Aorta (tissue), 5 donors: ENCODE measurements at regions of chr7 and their contacts with region 1.

Region 1: DNA sequence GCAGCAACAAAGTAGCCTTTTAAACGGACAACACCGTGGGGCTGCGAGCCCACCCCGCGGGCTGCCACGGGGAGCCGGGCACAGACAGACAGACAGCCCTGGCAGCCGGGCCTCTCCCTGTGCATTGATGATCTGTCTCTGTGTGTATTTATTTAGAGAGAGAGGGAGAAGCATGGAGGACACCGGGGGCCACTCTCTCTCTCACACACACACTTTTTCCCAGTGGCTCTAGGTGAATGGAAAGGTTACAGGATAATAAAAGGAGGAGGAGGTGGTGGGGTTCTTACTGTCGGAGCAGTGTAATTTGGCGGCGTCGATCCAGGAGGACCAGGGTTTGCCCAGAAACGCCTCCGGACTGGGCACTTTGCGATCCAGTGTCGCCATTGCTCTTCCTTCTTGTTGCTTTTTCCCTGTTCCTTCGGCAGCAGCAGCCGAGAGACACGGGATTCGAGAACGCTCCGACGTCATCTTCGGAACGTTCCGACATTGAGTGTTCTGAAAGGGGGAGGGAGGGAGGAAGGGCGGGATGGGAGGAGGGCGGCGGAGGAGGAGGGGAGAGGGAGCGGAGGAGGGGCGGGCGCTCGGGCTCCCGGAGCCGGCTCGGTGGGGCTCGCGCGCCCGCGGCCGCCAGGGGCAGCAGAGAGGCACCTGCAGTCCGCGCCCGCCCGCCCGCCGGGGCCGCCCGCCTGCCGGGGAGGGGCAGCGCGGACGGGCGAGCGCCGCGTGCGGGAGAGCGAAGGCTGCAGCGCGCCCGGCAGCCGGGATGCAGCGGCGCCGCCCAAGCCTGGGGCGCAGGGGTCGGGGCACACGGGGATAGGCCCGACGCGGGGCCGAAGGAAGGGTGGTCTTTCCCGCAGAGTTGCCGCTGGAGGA is at the start of gene ATXN7L1:
- DNase-seq: peak; percentile 97 to 98
- ATAC-seq: peak; percentile 98
- H3K4me3 ChIP-seq: peak within 1 kb of the TSS; percentile 59 to 71
- H3K27ac ChIP-seq: peak within 1 kb of the TSS in 1 of 2 donors; percentile 20
- H3K4me1 ChIP-seq: peaks cover 0 to 4% of the 10 kb centered on the region in 2 donors
- H3K27me3 ChIP-seq: no peaks in the 10 kb centered on the region
- total RNA-seq, gene ATXN7L1: 12.8 to 20.1 TPM

Region 2: DNA sequence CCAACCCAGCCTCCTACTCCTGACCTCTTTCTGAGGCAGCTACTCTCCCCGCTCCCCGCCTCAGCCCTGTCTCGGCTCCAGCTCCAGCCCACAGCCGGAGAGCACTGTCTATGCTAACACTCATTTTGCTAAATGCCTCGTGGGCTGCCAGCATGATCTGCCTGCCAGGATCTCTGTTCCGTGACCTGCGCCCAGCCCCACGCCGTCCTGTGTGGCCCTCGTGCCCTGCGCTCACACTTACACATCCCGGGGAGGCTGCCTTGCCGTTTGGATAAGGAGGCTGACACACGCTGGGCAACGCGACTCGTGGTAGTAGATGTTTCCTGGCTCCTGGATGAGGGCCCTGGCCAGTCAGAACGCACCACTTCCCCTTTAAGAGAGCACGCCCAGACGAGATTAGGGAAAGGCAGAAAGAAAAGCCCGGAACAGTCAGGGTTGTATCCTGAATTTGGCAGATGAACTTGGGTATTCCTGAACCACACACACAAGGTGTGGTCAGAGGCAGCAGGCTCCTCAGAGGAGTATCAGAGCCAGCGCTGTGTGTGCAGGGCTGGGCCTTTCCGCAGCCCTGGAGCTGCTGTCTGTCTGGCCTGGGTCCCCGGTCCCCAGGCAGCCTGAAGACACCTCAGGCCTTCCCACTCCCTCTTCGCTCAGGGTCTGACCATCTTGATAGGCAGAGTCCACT is 197.4 kb before region 1 on chr7:
- intact Hi-C with region 1: loop called in 1 of 2 experiments (anchors 10 kb)
- DNase-seq: peak; percentile 89 to 92
- ATAC-seq: peak; percentile 85
- H3K4me3 ChIP-seq: no peak overlapping the region
- H3K27ac ChIP-seq: no peak overlapping the region
- H3K4me1 ChIP-seq: no peaks in the 10 kb centered on the region
- H3K27me3 ChIP-seq: no peaks in the 10 kb centered on the region

Region 3: DNA sequence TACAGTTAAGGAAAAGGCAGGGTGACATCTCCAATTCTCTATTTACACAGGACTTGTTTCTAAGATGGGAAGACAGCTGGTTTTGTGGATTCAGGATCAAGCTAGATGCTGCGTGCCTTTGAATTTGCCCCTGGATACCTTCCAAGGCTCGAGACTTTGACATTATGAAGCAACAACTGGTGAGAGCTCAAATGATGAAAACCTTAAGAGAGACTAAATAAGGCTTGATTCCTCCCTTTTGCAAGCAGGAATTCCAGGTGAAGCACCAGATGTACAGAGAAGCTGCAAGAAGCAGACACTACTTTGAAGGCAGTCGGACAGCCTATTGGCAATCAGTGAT is 81.0 kb before region 1 on chr7:
- intact Hi-C with region 1: no loop called
- DNase-seq: no peak
- ATAC-seq: no peak
- H3K4me3 ChIP-seq: no peak overlapping the region
- H3K27ac ChIP-seq: no peak overlapping the region
- H3K4me1 ChIP-seq: no peaks in the 10 kb centered on the region
- H3K27me3 ChIP-seq: no peaks in the 10 kb centered on the region

Region 4: GRCh38 chr7:105866102-105866801 is 10.1 kb before region 1 on chr7:
- intact Hi-C with region 1: no loop called
- DNase-seq: no peak
- ATAC-seq: no peak
- H3K4me3 ChIP-seq: no peak overlapping the region
- H3K27ac ChIP-seq: no peak overlapping the region
- H3K4me1 ChIP-seq: no peaks in the 10 kb centered on the region
- H3K27me3 ChIP-seq: no peaks in the 10 kb centered on the region